ENCODE measurements at regions of chrX and their contacts with region 1.

Region 1: DNA sequence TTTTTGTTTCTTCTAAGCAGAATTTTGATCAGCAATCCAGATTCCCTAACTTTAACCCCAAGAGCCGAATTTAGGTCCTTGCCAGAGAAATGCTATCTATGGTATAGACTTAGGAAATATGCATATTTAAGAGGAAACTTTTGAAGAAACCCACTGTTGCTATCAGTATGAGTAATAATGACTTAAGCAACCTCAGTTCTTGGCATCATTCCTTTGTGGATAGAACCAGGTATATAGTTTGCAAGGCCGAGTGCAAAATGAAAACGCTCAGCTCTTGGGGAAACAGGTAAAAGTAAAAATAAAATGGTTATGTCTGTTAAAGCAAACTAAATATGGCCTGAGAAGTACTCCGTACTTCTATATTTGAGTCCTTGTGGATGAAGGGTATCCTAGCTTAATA is 78.1 kb downstream of the ARSF start:
- DNase-seq: no peak
- ATAC-seq: no peak
- H3K4me3 ChIP-seq: no peak overlapping the region
- H3K27ac ChIP-seq: no peak overlapping the region
- H3K4me1 ChIP-seq: no peaks in the 10 kb centered on the region
- H3K27me3 ChIP-seq: no peaks in the 10 kb centered on the region

Region 2: DNA sequence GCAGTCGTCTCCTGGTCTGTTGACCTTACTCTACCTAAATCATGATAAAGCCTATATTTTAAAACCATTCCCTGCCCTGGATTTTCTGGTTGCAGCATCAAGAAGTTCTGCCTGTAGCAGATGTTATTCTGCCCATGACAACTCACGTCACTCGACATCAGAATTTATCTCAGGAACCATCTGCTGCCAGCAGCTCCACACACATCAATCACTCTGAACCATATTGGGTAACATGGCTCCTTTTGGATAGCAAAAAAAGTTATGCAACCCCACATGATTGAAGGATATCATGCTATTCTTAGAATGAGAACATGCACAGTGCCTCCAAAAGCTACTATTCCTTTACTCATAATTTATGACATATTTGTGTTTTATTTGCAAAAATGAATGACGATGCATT is 960.0 kb before region 1 on chrX:
- intact Hi-C with region 1: no loop called
- DNase-seq: no peak
- ATAC-seq: no peak
- H3K4me3 ChIP-seq: no peak overlapping the region
- H3K27ac ChIP-seq: no peak overlapping the region
- H3K4me1 ChIP-seq: no peaks in the 10 kb centered on the region
- H3K27me3 ChIP-seq: no peaks in the 10 kb centered on the region

Region 3: DNA sequence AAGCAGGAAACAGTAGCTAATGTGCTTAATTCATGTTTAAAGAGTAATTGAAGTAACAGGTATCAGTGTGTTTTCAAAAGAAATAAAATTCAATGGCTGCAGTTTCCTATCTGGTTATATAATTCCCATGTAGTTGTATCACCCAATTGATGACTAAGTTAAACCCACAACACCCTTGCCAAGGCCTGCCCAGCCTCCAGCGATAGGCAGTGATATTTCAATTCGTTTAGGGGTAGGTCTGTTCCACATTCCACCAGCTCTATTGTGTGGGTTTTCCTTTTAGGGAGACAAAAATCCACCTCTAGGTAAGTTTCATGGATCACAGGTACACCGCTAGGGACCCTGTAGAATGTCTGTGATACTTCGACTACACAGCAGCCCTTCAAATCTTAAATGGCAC is 251.8 kb after region 1 on chrX:
- intact Hi-C with region 1: no loop called
- DNase-seq: no peak
- ATAC-seq: no peak
- H3K4me3 ChIP-seq: no peak overlapping the region
- H3K27ac ChIP-seq: no peak overlapping the region
- H3K4me1 ChIP-seq: no peaks in the 10 kb centered on the region
- H3K27me3 ChIP-seq: no peaks in the 10 kb centered on the region

Region 4: DNA sequence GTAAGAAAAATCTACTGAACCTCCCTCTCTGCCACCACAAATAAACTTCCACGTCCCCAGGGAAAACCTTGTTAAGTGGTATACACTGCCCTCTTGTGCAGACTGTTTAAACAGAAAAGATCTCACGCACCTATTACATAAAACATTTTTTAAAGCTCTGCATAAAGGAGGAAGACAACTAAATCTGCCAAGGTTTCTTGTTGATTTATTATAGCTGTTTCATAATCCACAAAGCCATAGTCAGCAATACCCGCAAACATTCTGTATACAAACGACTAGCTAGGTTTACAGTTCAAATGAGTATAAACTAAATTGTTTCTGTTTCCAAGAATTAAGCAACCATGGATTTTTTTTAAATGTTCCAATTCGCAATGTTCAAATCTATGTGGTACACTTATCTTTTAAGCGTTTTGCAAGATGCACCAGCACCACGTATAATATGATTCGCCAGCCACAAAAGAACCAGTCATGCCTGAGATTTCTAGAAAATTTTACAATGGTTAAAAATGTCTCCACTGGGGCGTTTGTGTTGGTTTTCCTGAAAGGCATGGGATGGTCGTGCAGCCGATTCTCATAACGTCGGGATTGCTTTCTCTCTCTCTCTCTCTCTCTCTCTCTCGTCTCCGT is 429.5 kb after region 1 on chrX:
- intact Hi-C with region 1: loop called in 1 of 2 experiments (anchors 10 kb)
- DNase-seq: no peak
- ATAC-seq: no peak
- H3K4me3 ChIP-seq: no peak overlapping the region
- H3K27ac ChIP-seq: no peak overlapping the region
- H3K4me1 ChIP-seq: no peaks in the 10 kb centered on the region
- H3K27me3 ChIP-seq: peaks cover 0 to 1% of the 10 kb centered on the region in 2 donors

Region 5: GRCh38 chrX:3638280-3638873 is 519.0 kb after region 1 on chrX:
- intact Hi-C with region 1: loop called (anchors 5 to 10 kb)
- DNase-seq: no peak
- ATAC-seq: no peak
- H3K4me3 ChIP-seq: no peak overlapping the region
- H3K27ac ChIP-seq: no peak overlapping the region
- H3K4me1 ChIP-seq: no peaks in the 10 kb centered on the region
- H3K27me3 ChIP-seq: no peaks in the 10 kb centered on the region

Measured in aorta (tissue), 5 donors.